Heart right ventricle (tissue), 16 donors: ENCODE measurements at regions of chr12 and their contacts with region 1.

Region 1: GRCh38 chr12:40010899-40011774 is 94.7 kb downstream of the SLC2A13 start:
- DNase-seq: peak in 1 of 2 donors; percentile 75
- ATAC-seq: peak; percentile 90 to 97 (median 94)
- H3K4me3 ChIP-seq: peak overlapping the region in 8 of 10 donors; percentile 8 to 48 (median 40)
- H3K27ac ChIP-seq: peak overlapping the region in 7 of 10 donors; percentile 8 to 68 (median 48)
- H3K4me1 ChIP-seq: peaks cover 7 to 24% (median 20%) of the 10 kb centered on the region in 9 donors
- H3K27me3 ChIP-seq: no peaks in the 10 kb centered on the region
- CTCF ChIP-seq: peak; percentile 67 to 94 (median 86)

Region 2: GRCh38 chr12:40054554-40055227 is 43.6 kb after region 1 on chr12:
- intact Hi-C with region 1: loop called in 1 of 10 experiments (anchors 5 kb)
- DNase-seq: peak in 1 of 2 donors; percentile 20
- ATAC-seq: peak; percentile 66 to 93 (median 74)
- H3K4me3 ChIP-seq: peak overlapping the region in 6 of 10 donors; percentile 1 to 28 (median 6)
- H3K27ac ChIP-seq: peak overlapping the region in 9 of 10 donors; percentile 24 to 73 (median 69)
- H3K4me1 ChIP-seq: peaks cover 0 to 30% (median 10%) of the 10 kb centered on the region in 9 donors
- H3K27me3 ChIP-seq: no peaks in the 10 kb centered on the region
- CTCF ChIP-seq: no peak

Region 3: GRCh38 chr12:40224439-40225291 is 213.5 kb after region 1 on chr12 and contains the start of gene LRRK2:
- intact Hi-C with region 1: loop called in 1 of 10 experiments (anchors 10 kb)
- DNase-seq: peak; percentile 86
- ATAC-seq: peak; percentile 85 to 97 (median 92)
- H3K4me3 ChIP-seq: peak within 1 kb of the TSS; percentile 52 to 78 (median 74)
- H3K27ac ChIP-seq: peak within 1 kb of the TSS; percentile 76 to 98 (median 95)
- H3K4me1 ChIP-seq: peaks cover 0 to 51% (median 8%) of the 10 kb centered on the region in 9 donors
- H3K27me3 ChIP-seq: no peaks in the 10 kb centered on the region
- CTCF ChIP-seq: peak in 5 of 9 donors; percentile 13 to 28 (median 17)
- total RNA-seq, gene LRRK2: 4.4 to 9.1 (median 7.0) TPM